ENCODE measurements at regions of chr16 and their contacts with region 1.

Region 1: DNA sequence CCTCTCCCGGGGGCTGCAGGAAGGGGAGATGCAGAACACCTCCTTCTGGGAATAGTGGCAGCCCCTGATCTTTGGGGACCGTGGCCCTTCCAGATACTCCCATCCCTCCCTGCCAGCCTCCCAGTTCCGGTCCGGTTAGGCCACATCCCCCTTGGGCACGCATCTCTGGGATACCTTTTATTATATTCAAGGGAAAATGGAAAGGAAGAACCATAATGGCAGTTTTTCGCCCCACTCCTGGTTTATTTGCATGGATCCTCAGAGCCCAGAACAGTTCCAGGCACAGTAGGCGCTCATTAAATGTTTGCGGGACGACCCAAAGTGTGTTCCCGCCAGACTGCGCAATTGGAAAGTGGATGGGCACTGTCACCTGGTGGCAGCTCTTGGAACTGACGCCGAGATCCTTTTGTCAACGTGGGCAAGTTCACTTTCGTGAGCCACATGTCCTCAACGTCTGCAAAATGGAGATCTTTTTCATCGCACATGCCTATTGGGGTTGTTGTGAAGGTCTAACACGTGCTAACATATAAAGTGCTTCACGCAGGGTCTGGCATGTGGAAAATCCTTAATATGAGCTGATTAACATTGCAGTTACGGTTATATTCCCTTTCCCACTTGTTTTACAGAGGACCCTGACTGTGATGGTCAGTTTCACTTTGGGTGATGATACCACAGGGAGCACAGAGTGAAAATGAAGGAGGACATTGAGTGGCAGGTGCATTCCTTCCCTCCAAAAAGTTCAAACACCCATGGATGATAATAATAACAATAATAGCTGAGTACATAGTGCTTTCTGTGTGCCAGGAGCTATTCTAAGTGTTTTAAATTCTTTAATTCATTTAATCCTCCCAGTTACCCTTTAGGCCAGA is 1.7 kb upstream of the GPRC5B start:
- DNase-seq: peak; percentile 94
- H3K4me3 Mint-ChIP-seq: peak overlapping the region; percentile 88
- H3K27ac Mint-ChIP-seq: peak overlapping the region; percentile 10
- H3K4me1 Mint-ChIP-seq: peaks cover 24% of the 10 kb centered on the region
- H3K27me3 Mint-ChIP-seq: peaks cover 38% of the 10 kb centered on the region

Region 2: DNA sequence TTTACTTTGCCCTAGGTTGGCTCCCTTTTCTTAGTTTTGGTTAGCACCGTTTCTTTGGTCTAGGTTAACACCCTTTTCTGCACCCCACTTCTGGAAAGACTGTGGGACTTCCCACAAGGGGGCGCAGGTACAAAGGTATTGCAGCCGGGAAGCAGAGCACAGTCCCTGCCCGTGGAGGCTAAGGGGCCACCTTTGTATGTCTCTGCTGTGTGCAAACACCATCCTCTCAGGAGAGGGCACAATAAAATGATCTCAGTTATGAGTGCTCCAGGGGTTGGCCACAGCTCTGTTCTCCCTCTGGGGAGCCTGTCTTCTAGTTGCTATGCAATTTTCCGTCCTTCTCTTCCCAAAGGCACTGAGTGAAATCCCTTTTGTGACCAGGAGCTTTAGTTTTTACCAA is 497.1 kb before region 1 on chr16:
- intact Hi-C with region 1: loop called (anchors 5 kb)
- DNase-seq: peak; percentile 87
- H3K4me3 Mint-ChIP-seq: no peak overlapping the region
- H3K27ac Mint-ChIP-seq: no peak overlapping the region
- H3K4me1 Mint-ChIP-seq: peaks cover 12% of the 10 kb centered on the region
- H3K27me3 Mint-ChIP-seq: peaks cover 41% of the 10 kb centered on the region

Region 3: DNA sequence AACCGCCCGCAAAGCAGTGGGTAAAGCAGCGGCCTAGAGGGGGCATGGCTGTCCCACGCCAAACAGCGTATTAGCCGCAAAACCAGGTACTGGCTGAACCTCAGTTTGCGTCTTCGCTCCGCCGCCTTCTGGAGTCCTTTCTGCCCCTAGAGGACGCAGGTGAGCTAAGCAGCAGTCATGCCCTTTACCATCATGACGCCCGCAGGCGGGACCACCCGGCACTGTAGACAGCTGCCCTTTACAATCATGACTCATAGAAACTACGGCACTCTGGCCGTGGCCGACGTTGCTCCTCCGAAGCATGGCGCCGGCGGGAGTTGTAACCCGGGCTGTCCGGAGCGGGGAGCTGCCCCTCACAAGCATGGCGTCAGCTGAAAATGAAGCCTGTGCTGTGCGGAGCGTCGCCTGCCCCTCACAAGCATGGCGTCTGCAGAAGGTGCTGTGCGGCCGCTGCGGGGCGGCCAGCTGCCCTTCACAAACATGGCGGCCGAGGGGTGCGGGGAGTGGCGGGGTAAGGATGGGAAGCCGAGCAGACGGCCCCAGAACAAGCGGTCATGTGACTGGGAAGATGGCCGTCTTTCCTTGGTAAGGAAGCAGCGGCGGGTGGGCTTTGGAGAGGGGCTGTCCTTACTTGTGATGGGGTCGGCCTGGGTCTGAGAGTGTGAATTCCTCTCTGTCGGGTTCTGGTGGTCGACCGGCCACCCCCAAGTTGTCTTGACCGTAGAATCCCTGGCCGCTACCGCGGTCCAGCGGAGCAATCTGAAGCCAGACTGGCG is 331.0 kb before region 1 on chr16 and contains the start of gene VPS35L:
- intact Hi-C with region 1: loop called (anchors 1 kb)
- DNase-seq: peak; percentile 99
- H3K4me3 Mint-ChIP-seq: peak within 1 kb of the TSS; percentile 97
- H3K27ac Mint-ChIP-seq: peak within 1 kb of the TSS; percentile 95
- H3K4me1 Mint-ChIP-seq: peaks cover 12% of the 10 kb centered on the region
- H3K27me3 Mint-ChIP-seq: no peaks in the 10 kb centered on the region
- total RNA-seq, gene VPS35L: 37.8 and 41.9 TPM in 2 replicates

Region 4: GRCh38 chr16:19583665-19584300 is 302.5 kb before region 1 on chr16:
- intact Hi-C with region 1: loop called (anchors 5 kb)
- DNase-seq: peak; percentile 74
- H3K4me3 Mint-ChIP-seq: no peak overlapping the region
- H3K27ac Mint-ChIP-seq: no peak overlapping the region
- H3K4me1 Mint-ChIP-seq: no peaks in the 10 kb centered on the region
- H3K27me3 Mint-ChIP-seq: no peaks in the 10 kb centered on the region

Region 5: GRCh38 chr16:19601083-19601976 is 285.0 kb before region 1 on chr16:
- intact Hi-C with region 1: loop called (anchors 1 kb)
- DNase-seq: peak; percentile 80
- H3K4me3 Mint-ChIP-seq: no peak overlapping the region
- H3K27ac Mint-ChIP-seq: no peak overlapping the region
- H3K4me1 Mint-ChIP-seq: no peaks in the 10 kb centered on the region
- H3K27me3 Mint-ChIP-seq: no peaks in the 10 kb centered on the region

Region 6: DNA sequence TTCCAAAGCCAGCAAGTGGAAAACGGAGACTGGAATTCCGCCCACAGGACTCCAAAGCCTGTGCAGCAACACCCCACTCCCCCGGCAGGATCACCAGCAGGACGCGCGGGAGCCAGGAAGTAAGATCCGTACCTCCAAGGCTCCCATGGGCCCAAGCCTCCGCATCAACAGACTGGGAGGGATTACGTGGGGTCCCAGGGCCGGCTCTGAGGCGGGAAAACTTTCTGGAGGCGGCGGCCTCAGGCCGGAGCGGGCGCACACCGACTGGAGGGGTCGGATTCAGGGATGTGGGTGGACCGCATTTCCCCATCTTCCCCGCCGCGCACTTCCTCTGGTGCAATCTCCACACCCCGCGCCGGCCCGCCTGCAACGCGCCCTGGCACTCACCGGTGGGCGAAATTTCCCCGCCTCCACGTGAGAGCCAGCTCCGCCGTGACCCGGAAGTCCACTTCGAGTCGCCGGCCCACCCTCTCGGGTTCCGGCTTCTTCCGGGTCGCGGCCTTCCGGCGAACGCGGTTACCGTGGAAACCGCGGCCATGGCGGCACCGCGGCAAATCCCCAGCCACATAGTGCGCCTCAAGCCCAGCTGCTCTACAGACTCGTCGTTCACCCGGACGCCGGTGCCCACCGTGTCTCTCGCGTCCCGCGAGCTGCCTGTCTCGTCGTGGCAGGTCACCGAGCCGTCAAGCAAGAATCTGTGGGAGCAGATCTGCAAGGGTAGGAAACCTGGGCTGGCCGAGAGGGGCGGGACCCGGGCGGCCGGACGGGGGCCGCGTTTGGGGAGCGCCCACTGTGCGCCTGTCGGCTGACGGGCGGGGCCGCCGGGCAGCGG is 168.3 kb before region 1 on chr16 and contains the starts of genes IQCK and KNOP1:
- intact Hi-C with region 1: loop called (anchors 1 kb)
- DNase-seq: peak; percentile 97
- H3K4me3 Mint-ChIP-seq: peak within 1 kb of the TSS; percentile 96
- H3K27ac Mint-ChIP-seq: peak within 1 kb of the TSS; percentile 89
- H3K4me1 Mint-ChIP-seq: peaks cover 18% of the 10 kb centered on the region
- H3K27me3 Mint-ChIP-seq: no peaks in the 10 kb centered on the region
- total RNA-seq, gene IQCK: 1.0 and 2.0 TPM in 2 replicates
- total RNA-seq, gene KNOP1: 36.9 and 37.0 TPM in 2 replicates

Region 7: DNA sequence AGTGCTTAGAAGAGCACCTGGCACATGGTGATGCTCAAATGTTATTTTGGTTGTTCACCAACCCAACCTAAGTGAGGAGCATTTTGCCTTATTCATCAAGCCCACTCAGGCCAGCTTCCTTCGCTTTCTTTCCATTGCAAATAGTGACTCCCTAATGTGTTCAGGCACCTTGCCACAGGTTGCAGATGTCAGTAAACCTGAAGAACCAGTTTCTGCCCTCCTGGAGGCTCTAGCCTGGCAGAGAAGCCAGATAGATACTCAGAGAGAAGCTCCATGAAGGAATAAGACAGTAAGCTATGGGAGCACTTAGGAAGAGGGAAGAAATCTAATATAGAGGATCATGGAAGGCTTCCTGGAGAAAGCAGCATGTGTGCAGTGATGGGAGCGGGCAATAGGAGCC is 163.5 kb after region 1 on chr16:
- intact Hi-C with region 1: no loop called
- DNase-seq: no peak
- H3K4me3 Mint-ChIP-seq: no peak overlapping the region
- H3K27ac Mint-ChIP-seq: no peak overlapping the region
- H3K4me1 Mint-ChIP-seq: no peaks in the 10 kb centered on the region
- H3K27me3 Mint-ChIP-seq: no peaks in the 10 kb centered on the region